ENCODE measurements at regions of chr3 and their contacts with region 1.

Region 1: GRCh38 chr3:27649277-27649676 is 72.8 kb downstream of the EOMES start:
- DNase-seq: no peak
- ATAC-seq: no peak
- H3K4me3 Mint-ChIP-seq: no peak overlapping the region
- H3K27ac Mint-ChIP-seq: no peak overlapping the region
- H3K4me1 Mint-ChIP-seq: no peaks in the 10 kb centered on the region
- H3K27me3 Mint-ChIP-seq: peaks cover 2% of the 10 kb centered on the region

Region 2: DNA sequence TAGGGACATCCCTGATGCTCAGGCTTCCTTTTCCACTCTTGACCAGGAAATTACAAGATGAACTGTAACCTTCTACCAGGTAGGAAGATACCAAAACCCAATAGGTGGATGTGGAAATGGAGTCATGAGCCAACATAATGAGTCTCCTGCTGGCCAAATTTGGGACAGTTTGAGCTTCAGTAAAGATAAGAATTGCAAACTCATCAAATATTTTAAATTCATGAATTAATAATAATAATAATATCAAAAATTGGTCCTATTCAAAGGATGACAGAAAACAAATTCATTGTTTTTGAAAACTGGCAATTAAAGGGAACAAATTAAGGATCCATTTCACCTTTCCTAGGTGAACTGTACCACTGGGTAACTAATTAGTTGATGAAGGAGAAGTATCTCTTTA is 589.8 kb before region 1 on chr3:
- CTCF ChIA-PET with region 1: no interaction called
- POLR2A ChIA-PET with region 1: no interaction called
- DNase-seq: no peak
- ATAC-seq: no peak
- H3K4me3 Mint-ChIP-seq: no peak overlapping the region
- H3K27ac Mint-ChIP-seq: no peak overlapping the region
- H3K4me1 Mint-ChIP-seq: no peaks in the 10 kb centered on the region
- H3K27me3 Mint-ChIP-seq: no peaks in the 10 kb centered on the region

Region 3: GRCh38 chr3:27659279-27660021 is 10.2 kb after region 1 on chr3:
- CTCF ChIA-PET with region 1: interaction called, 11 read pairs
- POLR2A ChIA-PET with region 1: no interaction called
- DNase-seq: peak; percentile 51
- ATAC-seq: peak; percentile 63
- H3K4me3 Mint-ChIP-seq: no peak overlapping the region
- H3K27ac Mint-ChIP-seq: no peak overlapping the region
- H3K4me1 Mint-ChIP-seq: no peaks in the 10 kb centered on the region
- H3K27me3 Mint-ChIP-seq: peaks cover 4% of the 10 kb centered on the region